Activated CD4-positive, alpha-beta T cell treated with anti-CD3 and anti-CD28 coated beads, Interleukin-2, amount 10 ng/mL, durations not matched to agents 24 days and 14 days (primary cell): ENCODE measurements at regions of chr12 and their contacts with region 1.

Region 1: GRCh38 chr12:111396726-111397445 is 8.8 kb upstream of the SH2B3 start:
- DNase-seq: peak; percentile 96
- H3K4me3 Mint-ChIP-seq: peak overlapping the region; percentile 78
- H3K27ac Mint-ChIP-seq: peak overlapping the region; percentile 70
- H3K4me1 Mint-ChIP-seq: peaks cover 32% of the 10 kb centered on the region
- H3K27me3 Mint-ChIP-seq: peaks cover 4% of the 10 kb centered on the region

Region 2: GRCh38 chr12:111330800-111331752 is 65.8 kb before region 1 on chr12:
- intact Hi-C with region 1: loop called (anchors 2 kb)
- DNase-seq: peak; percentile 62
- H3K4me3 Mint-ChIP-seq: no peak overlapping the region
- H3K27ac Mint-ChIP-seq: no peak overlapping the region
- H3K4me1 Mint-ChIP-seq: peaks cover 3% of the 10 kb centered on the region
- H3K27me3 Mint-ChIP-seq: peaks cover 2% of the 10 kb centered on the region

Region 3: GRCh38 chr12:111451649-111452129 is 54.8 kb after region 1 on chr12:
- intact Hi-C with region 1: loop called (anchors 1 kb)
- DNase-seq: peak; percentile 83
- H3K4me3 Mint-ChIP-seq: no peak overlapping the region
- H3K27ac Mint-ChIP-seq: peak overlapping the region; percentile 12
- H3K4me1 Mint-ChIP-seq: peaks cover 42% of the 10 kb centered on the region
- H3K27me3 Mint-ChIP-seq: no peaks in the 10 kb centered on the region

Region 4: GRCh38 chr12:111529424-111530368 is 132.8 kb after region 1 on chr12:
- intact Hi-C with region 1: loop called (anchors 1 kb)
- DNase-seq: peak; percentile 87
- H3K4me3 Mint-ChIP-seq: no peak overlapping the region
- H3K27ac Mint-ChIP-seq: no peak overlapping the region
- H3K4me1 Mint-ChIP-seq: peaks cover 5% of the 10 kb centered on the region
- H3K27me3 Mint-ChIP-seq: no peaks in the 10 kb centered on the region

Region 5: DNA sequence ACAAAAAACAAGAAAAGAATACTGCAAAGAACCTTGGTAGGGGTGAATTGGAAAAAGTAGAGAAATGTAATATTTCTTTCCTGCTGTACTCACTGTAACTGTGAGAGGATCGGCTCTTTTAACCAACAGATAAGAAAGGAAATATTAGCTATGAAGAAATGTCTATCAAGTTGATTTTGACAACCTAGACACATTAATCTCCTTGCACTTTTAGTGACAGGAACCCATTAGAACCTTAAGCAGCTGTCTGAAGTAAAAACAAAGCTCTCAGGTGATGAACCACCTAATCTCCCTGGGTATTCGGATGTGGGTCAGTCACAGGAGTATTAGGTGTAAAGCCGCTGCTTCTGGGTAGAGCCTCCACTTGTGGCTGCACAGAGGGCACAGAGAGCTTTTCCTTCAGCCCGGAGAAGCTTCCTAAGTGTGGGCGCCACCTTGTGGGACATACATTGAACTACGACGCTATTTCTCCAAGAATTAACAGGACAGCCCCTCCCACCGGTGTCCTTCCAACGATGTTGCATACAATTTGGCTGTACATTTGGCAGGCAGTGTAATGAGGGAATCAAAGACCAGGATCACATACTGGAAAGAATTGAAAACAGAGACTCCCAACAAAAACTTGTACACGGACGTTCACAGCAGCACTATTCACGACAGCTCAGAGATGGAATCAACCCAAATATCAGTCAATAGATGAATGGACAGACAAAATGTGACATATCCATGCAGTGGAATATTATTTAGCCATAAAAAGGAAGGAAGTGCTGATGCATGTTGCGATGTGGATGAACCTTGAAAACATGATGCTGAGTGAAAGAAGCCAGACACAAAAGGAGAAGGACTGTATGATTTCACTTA is 416.2 kb after region 1 on chr12:
- intact Hi-C with region 1: loop called (anchors 1 kb)
- DNase-seq: peak; percentile 89
- H3K4me3 Mint-ChIP-seq: no peak overlapping the region
- H3K27ac Mint-ChIP-seq: no peak overlapping the region
- H3K4me1 Mint-ChIP-seq: peaks cover 7% of the 10 kb centered on the region
- H3K27me3 Mint-ChIP-seq: peaks cover 14% of the 10 kb centered on the region